Activated naive CD4-positive, alpha-beta T cell treated with anti-CD3 and anti-CD28 coated beads for 36 hours (primary cell): ENCODE measurements at regions of chr14 and their contacts with region 1.

Region 1: GRCh38 chr14:100067971-100068959 is 3.0 kb downstream of the EVL start:
- DNase-seq: peak; percentile 92
- H3K4me3 Mint-ChIP-seq: peak overlapping the region; percentile 83
- H3K27ac Mint-ChIP-seq: peak overlapping the region; percentile 100
- H3K4me1 Mint-ChIP-seq: peaks cover 74% of the 10 kb centered on the region
- H3K27me3 Mint-ChIP-seq: no peaks in the 10 kb centered on the region

Region 2: DNA sequence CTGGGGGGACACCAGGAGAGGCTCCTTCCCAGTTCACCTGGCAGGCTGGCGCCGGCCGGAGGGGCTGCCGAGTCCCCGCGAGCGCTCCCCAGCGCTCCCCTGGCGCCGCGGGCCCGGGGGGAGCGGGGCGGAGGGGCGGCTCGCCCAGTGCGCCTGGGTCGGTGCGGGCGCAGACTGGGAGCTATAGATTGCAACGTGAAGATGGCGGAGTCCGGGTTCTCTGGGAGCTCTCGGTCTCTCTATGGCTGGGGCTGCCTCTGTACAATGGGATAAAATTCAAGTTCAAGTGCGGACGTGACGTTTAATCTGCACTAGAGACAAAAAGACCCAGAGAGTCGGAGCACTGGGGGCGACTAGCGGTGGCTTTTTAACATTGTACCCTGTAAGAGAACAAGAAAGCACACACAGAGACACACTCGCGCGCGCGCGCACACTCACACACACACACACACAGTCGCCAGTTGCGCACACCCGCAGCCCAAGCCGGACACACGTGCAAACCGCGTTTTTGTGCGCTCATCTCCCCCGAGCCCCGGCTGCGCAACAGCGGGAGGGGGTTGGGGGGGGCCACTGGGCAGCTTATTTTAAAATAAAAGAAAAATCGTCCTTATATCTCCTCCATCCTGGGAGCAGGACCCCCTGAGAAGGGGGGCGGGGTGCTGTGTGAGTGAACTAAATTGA is 796.2 kb before region 1 on chr14 and contains the start of gene BCL11B:
- CTCF ChIA-PET with region 1: no interaction called
- intact Hi-C with region 1: loop called (anchors 10 kb)
- DNase-seq: peak; percentile 95
- H3K4me3 Mint-ChIP-seq: peak within 1 kb of the TSS; percentile 96
- H3K27ac Mint-ChIP-seq: peak within 1 kb of the TSS; percentile 97
- H3K4me1 Mint-ChIP-seq: peaks cover 23% of the 10 kb centered on the region
- H3K27me3 Mint-ChIP-seq: no peaks in the 10 kb centered on the region
- total RNA-seq, gene BCL11B: 71.7 to 71.9 TPM

Region 3: GRCh38 chr14:99930420-99931274 is 137.6 kb before region 1 on chr14:
- CTCF ChIA-PET with region 1: no interaction called
- intact Hi-C with region 1: loop called (anchors 2 kb)
- DNase-seq: peak; percentile 86
- H3K4me3 Mint-ChIP-seq: no peak overlapping the region
- H3K27ac Mint-ChIP-seq: peak overlapping the region; percentile 53
- H3K4me1 Mint-ChIP-seq: peaks cover 8% of the 10 kb centered on the region
- H3K27me3 Mint-ChIP-seq: peaks cover 3% of the 10 kb centered on the region

Region 4: DNA sequence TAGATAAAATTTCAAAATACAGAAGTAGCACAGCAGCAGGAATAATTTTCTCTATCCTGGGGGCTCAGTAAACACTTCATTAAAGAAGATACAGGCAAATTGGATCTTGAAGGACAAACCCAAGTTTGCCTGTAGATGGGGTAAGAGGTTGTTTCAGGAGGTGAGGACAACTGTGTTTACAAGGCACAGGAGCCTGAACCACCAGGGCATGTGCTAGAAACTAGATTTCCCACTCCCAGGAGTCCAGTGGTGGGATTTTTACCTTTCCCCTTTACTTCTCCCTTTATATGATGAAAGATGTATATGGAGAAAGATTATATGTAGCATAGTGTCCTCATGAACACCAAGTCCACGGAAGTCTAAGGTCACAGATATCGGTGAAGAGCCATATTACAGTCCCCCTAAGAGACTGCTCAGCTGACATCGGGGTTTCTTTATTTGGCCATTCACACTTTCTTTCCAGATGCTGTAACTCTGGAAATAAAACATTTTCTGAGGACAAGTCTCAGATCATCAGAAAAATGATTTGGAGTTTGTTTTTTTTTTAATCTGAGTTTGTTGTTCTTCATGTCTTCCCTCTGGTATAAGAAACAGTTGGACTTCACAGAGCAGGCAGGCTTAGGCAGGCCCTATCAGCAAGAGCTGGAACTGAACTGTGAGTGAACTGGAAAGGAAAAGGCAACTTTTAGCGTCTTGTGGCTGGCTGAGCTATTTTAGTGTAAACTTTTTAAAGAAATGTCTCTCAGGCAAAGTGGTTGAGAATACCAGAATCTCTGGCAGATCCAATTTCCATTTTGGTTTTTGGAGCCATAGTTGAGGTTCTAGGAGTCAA is 11.1 kb before region 1 on chr14:
- CTCF ChIA-PET with region 1: interaction called, 15 read pairs
- intact Hi-C with region 1: loop called (anchors 1 kb)
- DNase-seq: no peak
- H3K4me3 Mint-ChIP-seq: peak overlapping the region; percentile 25
- H3K27ac Mint-ChIP-seq: peak overlapping the region; percentile 80
- H3K4me1 Mint-ChIP-seq: peaks cover 52% of the 10 kb centered on the region
- H3K27me3 Mint-ChIP-seq: no peaks in the 10 kb centered on the region

Region 5: GRCh38 chr14:100108042-100108825 is 40.0 kb after region 1 on chr14:
- CTCF ChIA-PET with region 1: interaction called, 932 read pairs
- intact Hi-C with region 1: loop called (anchors 1 kb)
- DNase-seq: peak; percentile 94
- H3K4me3 Mint-ChIP-seq: no peak overlapping the region
- H3K27ac Mint-ChIP-seq: peak overlapping the region; percentile 94
- H3K4me1 Mint-ChIP-seq: peaks cover 75% of the 10 kb centered on the region
- H3K27me3 Mint-ChIP-seq: no peaks in the 10 kb centered on the region

Region 6: GRCh38 chr14:100213956-100214774 is 145.9 kb after region 1 on chr14:
- CTCF ChIA-PET with region 1: no interaction called
- intact Hi-C with region 1: loop called (anchors 2 kb)
- DNase-seq: peak; percentile 92
- H3K4me3 Mint-ChIP-seq: peak overlapping the region; percentile 79
- H3K27ac Mint-ChIP-seq: peak overlapping the region; percentile 86
- H3K4me1 Mint-ChIP-seq: peaks cover 24% of the 10 kb centered on the region
- H3K27me3 Mint-ChIP-seq: no peaks in the 10 kb centered on the region

Region 7: GRCh38 chr14:100375963-100376735 is 307.9 kb after region 1 on chr14:
- CTCF ChIA-PET with region 1: interaction called, 3 read pairs
- intact Hi-C with region 1: loop called (anchors 1 kb)
- DNase-seq: peak; percentile 94
- H3K4me3 Mint-ChIP-seq: peak within 1 kb of the TSS; percentile 99
- H3K27ac Mint-ChIP-seq: peak within 1 kb of the TSS; percentile 98
- H3K4me1 Mint-ChIP-seq: peaks cover 45% of the 10 kb centered on the region
- H3K27me3 Mint-ChIP-seq: no peaks in the 10 kb centered on the region